IMR-90 (cell line): ENCODE measurements at regions of chr11 and their contacts with region 1.

Region 1: GRCh38 chr11:57249384-57250319 is 12.6 kb upstream of the APLNR start:
- DNase-seq: peak; percentile 64
- ATAC-seq: peak; percentile 73
- H3K4me3 ChIP-seq: no peak overlapping the region
- H3K27ac ChIP-seq: no peak overlapping the region
- H3K4me1 ChIP-seq: no peaks in the 10 kb centered on the region; the same call in 1 of the 2 replicates
- H3K27me3 ChIP-seq: no peaks in the 10 kb centered on the region
- CTCF ChIP-seq: peak; percentile 96
- POLR2A ChIP-seq: peak; percentile 59
- RAD21 ChIP-seq: peak; percentile 97

Region 2: DNA sequence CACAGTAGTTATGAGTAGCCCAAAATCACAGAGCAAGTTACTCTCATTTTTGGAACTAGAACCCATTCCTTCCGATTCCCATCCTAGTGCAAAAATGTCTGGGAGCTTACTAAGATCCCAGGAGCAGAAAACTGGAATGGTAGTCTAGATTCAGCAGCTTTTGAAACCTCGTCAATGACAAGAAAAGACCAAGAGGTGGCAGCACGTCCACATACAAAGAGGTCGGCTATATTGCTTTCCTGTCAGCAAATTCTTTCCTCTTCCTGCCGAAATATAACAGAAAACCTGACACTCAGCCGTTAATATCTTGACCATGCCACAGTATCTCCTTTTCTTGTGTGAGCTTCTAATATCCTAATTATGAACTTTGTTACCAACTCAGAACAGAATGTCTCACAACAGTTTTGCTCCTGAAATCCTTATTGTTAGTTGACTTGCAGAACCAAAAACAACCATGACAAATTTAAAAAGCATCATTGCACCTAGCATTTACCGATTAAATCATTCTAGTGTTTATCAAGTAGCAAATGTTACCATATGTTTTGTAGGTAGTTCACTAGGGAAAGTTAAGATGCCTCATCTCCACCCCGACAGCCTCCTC is 408.3 kb before region 1 on chr11:
- CTCF ChIA-PET with region 1: interaction called, 67 read pairs
- POLR2A ChIA-PET with region 1: interaction called, 5 read pairs
- dilution Hi-C with region 1: no loop called
- in situ Hi-C with region 1: loop called (anchors 5 kb)
- intact Hi-C with region 1: loop called (anchors 1 kb)
- DNase-seq: peak; percentile 56
- ATAC-seq: peak; percentile 83
- H3K4me3 ChIP-seq: no peak overlapping the region
- H3K27ac ChIP-seq: no peak overlapping the region
- H3K4me1 ChIP-seq: no peaks in the 10 kb centered on the region
- H3K27me3 ChIP-seq: no peaks in the 10 kb centered on the region
- CTCF ChIP-seq: peak; percentile 73
- POLR2A ChIP-seq: no peak
- RAD21 ChIP-seq: peak; percentile 84

Region 3: GRCh38 chr11:57085611-57086010 is 164.0 kb before region 1 on chr11:
- CTCF ChIA-PET with region 1: interaction called, 5 read pairs
- POLR2A ChIA-PET with region 1: no interaction called
- dilution Hi-C with region 1: no loop called
- in situ Hi-C with region 1: no loop called
- intact Hi-C with region 1: loop called (anchors 1 kb)
- DNase-seq: no peak
- ATAC-seq: no peak
- H3K4me3 ChIP-seq: no peak overlapping the region
- H3K27ac ChIP-seq: no peak overlapping the region
- H3K4me1 ChIP-seq: no peaks in the 10 kb centered on the region
- H3K27me3 ChIP-seq: peaks cover 6% of the 10 kb centered on the region
- CTCF ChIP-seq: 0 out of 2 replicates have a peak, but pooled peaks have one; percentile 18
- POLR2A ChIP-seq: no peak
- RAD21 ChIP-seq: no peak

Region 4: DNA sequence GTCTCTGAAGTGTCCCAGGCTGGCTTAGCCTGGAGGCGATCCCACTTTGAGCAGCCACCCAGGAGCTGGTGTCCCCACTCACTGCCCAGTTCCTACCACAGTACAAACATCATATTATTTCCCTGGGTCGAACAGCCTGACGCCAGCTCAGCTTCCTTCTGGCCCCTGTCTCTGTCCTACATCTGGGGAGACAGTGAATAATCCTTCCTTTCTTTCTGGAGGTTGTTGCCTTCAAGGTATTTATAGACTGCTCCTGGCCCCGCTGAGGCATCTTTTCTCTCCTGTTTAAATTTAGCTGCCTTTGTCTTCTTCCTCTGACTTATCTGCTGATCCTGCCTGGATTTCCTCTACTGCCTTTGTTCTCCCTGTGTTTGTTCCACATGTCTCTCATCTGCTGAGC is 124.7 kb before region 1 on chr11:
- CTCF ChIA-PET with region 1: interaction called, 18 read pairs
- POLR2A ChIA-PET with region 1: interaction called, 13 read pairs
- dilution Hi-C with region 1: no loop called
- in situ Hi-C with region 1: loop called (anchors 5 kb)
- intact Hi-C with region 1: no loop called
- DNase-seq: no peak
- ATAC-seq: no peak
- H3K4me3 ChIP-seq: no peak overlapping the region
- H3K27ac ChIP-seq: no peak overlapping the region
- H3K4me1 ChIP-seq: no peaks in the 10 kb centered on the region
- H3K27me3 ChIP-seq: peaks cover 19% of the 10 kb centered on the region
- CTCF ChIP-seq: no peak
- POLR2A ChIP-seq: no peak
- RAD21 ChIP-seq: no peak

Region 5: GRCh38 chr11:57205041-57205671 is 44.5 kb before region 1 on chr11:
- CTCF ChIA-PET with region 1: interaction called, 40 read pairs
- POLR2A ChIA-PET with region 1: interaction called, 3 read pairs
- dilution Hi-C with region 1: no loop called
- in situ Hi-C with region 1: no loop called
- intact Hi-C with region 1: loop called (anchors 2 kb)
- DNase-seq: peak; percentile 62
- ATAC-seq: peak; percentile 93
- H3K4me3 ChIP-seq: no peak overlapping the region
- H3K27ac ChIP-seq: no peak overlapping the region
- H3K4me1 ChIP-seq: no peaks in the 10 kb centered on the region; the same call in 1 of the 2 replicates
- H3K27me3 ChIP-seq: peaks cover 44% of the 10 kb centered on the region
- CTCF ChIP-seq: peak; percentile 38
- POLR2A ChIP-seq: no peak
- RAD21 ChIP-seq: peak; percentile 33

Region 6: GRCh38 chr11:57324886-57325734 is 75.5 kb after region 1 on chr11 and contains the start of gene TNKS1BP1:
- CTCF ChIA-PET with region 1: interaction called, 4 read pairs
- POLR2A ChIA-PET with region 1: no interaction called
- dilution Hi-C with region 1: no loop called
- in situ Hi-C with region 1: no loop called
- intact Hi-C with region 1: loop called (anchors 2 kb)
- DNase-seq: peak; percentile 97
- ATAC-seq: peak; percentile 80
- H3K4me3 ChIP-seq: peak within 1 kb of the TSS; percentile 97
- H3K27ac ChIP-seq: peak within 1 kb of the TSS; percentile 99
- H3K4me1 ChIP-seq: peaks cover 20% of the 10 kb centered on the region
- H3K27me3 ChIP-seq: no peaks in the 10 kb centered on the region
- CTCF ChIP-seq: no peak
- POLR2A ChIP-seq: peak; percentile 81
- RAD21 ChIP-seq: 0 out of 2 replicates have a peak, but pooled peaks have one; percentile 11
- total RNA-seq, gene TNKS1BP1: 28.6 and 31.7 TPM in 2 replicates

Region 7: DNA sequence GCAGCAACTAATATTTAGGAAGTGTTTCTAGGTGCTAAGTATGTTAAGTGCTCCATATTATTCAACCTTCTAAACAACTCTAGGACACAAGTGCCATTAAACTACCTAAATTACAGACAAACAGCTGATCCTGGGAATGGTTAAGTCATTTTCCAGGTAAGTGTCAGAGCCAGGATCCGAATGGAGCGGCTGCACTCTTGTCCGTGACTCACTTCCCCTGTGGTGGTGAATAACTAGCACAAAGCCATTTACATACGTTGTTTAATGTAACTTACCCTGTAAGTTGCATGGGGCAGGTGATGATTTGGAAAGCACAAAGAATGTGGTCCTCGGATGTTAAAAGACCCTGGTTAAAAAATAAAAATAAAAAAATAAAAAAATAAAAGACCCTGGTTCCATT is 149.6 kb after region 1 on chr11:
- CTCF ChIA-PET with region 1: no interaction called
- POLR2A ChIA-PET with region 1: no interaction called
- dilution Hi-C with region 1: no loop called
- in situ Hi-C with region 1: no loop called
- intact Hi-C with region 1: no loop called
- DNase-seq: no peak
- ATAC-seq: no peak
- H3K4me3 ChIP-seq: no peak overlapping the region
- H3K27ac ChIP-seq: no peak overlapping the region
- H3K4me1 ChIP-seq: no peaks in the 10 kb centered on the region
- H3K27me3 ChIP-seq: peaks cover 46% of the 10 kb centered on the region
- CTCF ChIP-seq: no peak
- POLR2A ChIP-seq: no peak
- RAD21 ChIP-seq: no peak

Region 8: GRCh38 chr11:57474017-57474802 is 224.6 kb after region 1 on chr11:
- CTCF ChIA-PET with region 1: no interaction called
- POLR2A ChIA-PET with region 1: no interaction called
- dilution Hi-C with region 1: no loop called
- in situ Hi-C with region 1: no loop called
- intact Hi-C with region 1: no loop called
- DNase-seq: peak; percentile 7
- ATAC-seq: peak; percentile 35; the same call in 1 of the 2 replicates
- H3K4me3 ChIP-seq: no peak overlapping the region
- H3K27ac ChIP-seq: no peak overlapping the region
- H3K4me1 ChIP-seq: no peaks in the 10 kb centered on the region
- H3K27me3 ChIP-seq: peaks cover 33% of the 10 kb centered on the region
- CTCF ChIP-seq: no peak
- POLR2A ChIP-seq: no peak
- RAD21 ChIP-seq: no peak